A673 (cell line): ENCODE measurements at regions of chr3 and their contacts with region 1.

Region 1: DNA sequence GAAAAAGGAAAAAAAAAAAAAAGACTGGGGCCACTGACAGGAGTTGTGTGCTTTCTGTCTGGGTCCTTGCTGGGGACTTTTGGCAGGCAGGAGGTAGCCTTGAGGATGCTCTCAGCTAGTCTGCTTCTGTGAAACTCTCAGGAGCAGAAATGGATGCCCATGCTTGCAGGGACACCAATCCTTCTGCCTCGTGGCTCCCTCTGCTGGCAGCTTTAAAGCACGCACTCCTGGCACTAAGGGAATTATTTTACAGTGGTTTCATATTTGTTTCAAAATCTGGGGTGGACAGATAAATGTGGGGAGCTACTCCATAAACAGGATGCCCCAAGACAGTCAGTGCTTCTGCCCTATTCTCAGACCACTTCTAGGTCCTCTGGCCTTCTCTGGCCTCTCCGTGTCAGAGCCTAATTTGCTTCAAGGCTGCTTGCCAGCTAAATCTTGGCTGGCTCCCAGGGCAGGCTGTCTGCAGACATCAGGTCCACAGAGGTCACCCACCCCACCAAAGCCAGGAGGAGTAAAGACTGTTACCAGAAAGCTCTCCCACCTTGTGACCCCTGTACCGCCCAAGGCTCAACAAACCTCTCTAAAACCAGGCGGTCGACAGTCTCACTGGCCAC is 17.1 kb downstream of the TRAIP start:
- DNase-seq: peak; percentile 68
- H3K4me3 ChIP-seq: no peak overlapping the region
- H3K27ac ChIP-seq: no peak overlapping the region
- H3K4me1 ChIP-seq: no peaks in the 10 kb centered on the region
- H3K27me3 ChIP-seq: no peaks in the 10 kb centered on the region
- CTCF ChIP-seq: peak; percentile 78

Region 2: DNA sequence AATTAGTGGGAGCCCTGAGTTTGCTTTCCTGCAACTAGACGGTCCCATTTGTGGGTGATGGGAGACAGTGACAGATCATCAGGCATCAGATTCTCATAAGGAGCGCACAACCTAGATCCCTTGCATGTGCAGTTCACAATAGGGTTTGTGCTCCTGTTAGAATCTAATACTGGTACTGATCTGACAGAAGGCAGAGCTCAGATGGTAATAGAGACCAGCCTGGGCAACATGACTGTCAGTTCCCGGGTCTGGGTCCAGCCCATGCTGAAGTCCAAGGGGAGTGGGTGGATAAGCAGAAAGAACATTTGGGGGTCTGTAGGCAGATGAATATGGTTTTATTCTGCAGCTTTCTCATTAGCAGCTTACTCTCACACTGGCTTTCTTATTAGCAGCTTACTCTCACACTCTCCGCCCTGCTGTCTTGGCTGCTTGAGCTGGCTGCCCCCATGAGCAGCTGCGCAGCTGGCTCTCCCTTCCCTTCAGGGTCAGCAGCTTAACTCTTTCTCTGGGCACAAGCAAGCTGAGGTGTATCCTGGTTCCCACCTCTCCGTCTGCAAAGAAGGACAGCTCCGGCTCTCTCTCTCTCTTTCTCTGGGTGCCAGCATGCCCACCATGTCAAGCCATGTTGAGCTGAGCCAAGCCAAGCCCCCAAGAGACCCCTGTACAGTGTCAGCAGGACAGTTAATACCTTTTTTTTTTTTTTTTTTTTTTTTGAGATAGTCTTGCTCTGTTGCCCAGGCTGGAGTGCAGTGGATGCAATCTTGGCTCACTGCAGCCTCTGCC is 621.4 kb before region 1 on chr3:
- CTCF ChIA-PET with region 1: no interaction called
- POLR2A ChIA-PET with region 1: no interaction called
- intact Hi-C with region 1: no loop called
- DNase-seq: no peak
- H3K4me3 ChIP-seq: no peak overlapping the region
- H3K27ac ChIP-seq: no peak overlapping the region
- H3K4me1 ChIP-seq: no peaks in the 10 kb centered on the region
- H3K27me3 ChIP-seq: no peaks in the 10 kb centered on the region
- CTCF ChIP-seq: no peak

Region 3: GRCh38 chr3:49723628-49724551 is 115.4 kb before region 1 on chr3 and contains the start of gene GMPPB:
- CTCF ChIA-PET with region 1: interaction called, 4 read pairs
- POLR2A ChIA-PET with region 1: no interaction called
- intact Hi-C with region 1: loop called (anchors 10 kb)
- DNase-seq: peak; percentile 88
- H3K4me3 ChIP-seq: peak within 1 kb of the TSS; percentile 83
- H3K27ac ChIP-seq: peak within 1 kb of the TSS; percentile 85
- H3K4me1 ChIP-seq: no peaks in the 10 kb centered on the region
- H3K27me3 ChIP-seq: no peaks in the 10 kb centered on the region
- CTCF ChIP-seq: no peak
- total RNA-seq, gene GMPPB: 15.2 and 16.6 TPM in 2 replicates

Region 4: DNA sequence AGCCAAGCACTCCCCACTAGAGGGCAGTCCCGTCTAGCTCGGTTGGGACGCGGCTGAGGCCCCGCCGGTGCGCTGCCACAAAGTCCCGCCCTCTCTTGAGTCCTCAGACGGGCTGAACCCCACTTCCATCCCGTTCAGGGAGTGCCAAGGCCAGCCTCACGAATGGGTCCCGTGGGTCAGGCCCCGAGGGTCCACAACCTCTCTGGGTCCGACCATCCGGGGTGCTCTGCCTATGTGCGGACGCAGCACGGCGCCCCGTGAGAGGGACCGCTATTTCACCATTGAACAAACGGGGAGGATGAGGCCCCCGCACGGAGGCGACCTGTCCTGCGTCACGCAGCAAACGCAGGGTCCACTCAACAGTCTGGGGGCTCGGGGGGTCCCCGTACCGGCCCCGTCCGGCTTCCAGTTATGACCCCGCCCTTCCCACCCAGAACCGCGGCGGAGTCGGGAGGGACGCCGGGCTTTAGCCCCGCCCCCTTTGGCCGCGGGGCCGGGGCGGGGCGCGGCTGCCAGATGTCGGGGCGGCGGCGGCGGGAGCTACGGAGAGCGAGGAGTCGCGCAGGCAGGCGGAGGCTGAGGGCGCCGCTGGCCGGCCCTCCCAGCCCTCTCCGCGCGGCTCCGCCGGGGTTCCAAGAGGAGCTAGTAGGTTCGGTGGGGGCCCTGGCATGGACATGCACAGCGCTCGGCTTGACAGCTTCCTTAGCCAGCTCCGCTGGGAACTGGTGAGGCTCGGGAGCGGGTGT is 36.4 kb before region 1 on chr3 and contains the start of gene INKA1:
- CTCF ChIA-PET with region 1: interaction called, 39 read pairs
- POLR2A ChIA-PET with region 1: interaction called, 19 read pairs
- intact Hi-C with region 1: loop called (anchors 1 kb)
- DNase-seq: peak; percentile 81
- H3K4me3 ChIP-seq: peak within 1 kb of the TSS; percentile 64
- H3K27ac ChIP-seq: peak within 1 kb of the TSS; percentile 98
- H3K4me1 ChIP-seq: peaks cover 37% of the 10 kb centered on the region
- H3K27me3 ChIP-seq: no peaks in the 10 kb centered on the region
- CTCF ChIP-seq: peak; percentile 75
- total RNA-seq, gene INKA1: 7.1 and 13.8 TPM in 2 replicates

Region 5: GRCh38 chr3:49906004-49906743 is 66.9 kb after region 1 on chr3:
- CTCF ChIA-PET with region 1: interaction called, 4 read pairs
- POLR2A ChIA-PET with region 1: no interaction called
- intact Hi-C with region 1: loop called (anchors 10 kb)
- DNase-seq: peak; percentile 60
- H3K4me3 ChIP-seq: no peak overlapping the region
- H3K27ac ChIP-seq: no peak overlapping the region
- H3K4me1 ChIP-seq: no peaks in the 10 kb centered on the region
- H3K27me3 ChIP-seq: no peaks in the 10 kb centered on the region
- CTCF ChIP-seq: peak; percentile 66